T-cell (primary cell): ENCODE measurements at regions of chr6 and their contacts with region 1.

Region 1: GRCh38 chr6:159134701-159135364 is 34.4 kb upstream of the FNDC1 start:
- DNase-seq: peak; percentile 39 to 88 (median 68)
- ATAC-seq: peak; percentile 85 to 92 (median 88)
- H3K4me3 ChIP-seq: no peak overlapping the region
- H3K4me3 Mint-ChIP-seq: no peak overlapping the region
- H3K27ac ChIP-seq: no peak overlapping the region
- H3K27ac Mint-ChIP-seq: no peak overlapping the region
- H3K4me1 ChIP-seq: no peaks in the 10 kb centered on the region
- H3K4me1 Mint-ChIP-seq: peaks cover 6 to 7% (median 6%) of the 10 kb centered on the region in 3 donors
- H3K27me3 ChIP-seq: peaks cover 0 to 16% of the 10 kb centered on the region in 2 experiments
- H3K27me3 Mint-ChIP-seq: peaks cover 0 to 6% of the 10 kb centered on the region in 2 donors

Region 2: GRCh38 chr6:159110013-159110412 is 24.8 kb before region 1 on chr6:
- CTCF ChIA-PET with region 1: interaction called, 9 to 24 read pairs
- POLR2A ChIA-PET with region 1: no interaction called
- DNase-seq: peak in 7 of 35 experiments; percentile 24 to 75 (median 31)
- ATAC-seq: no peak
- H3K4me3 ChIP-seq: no peak overlapping the region
- H3K4me3 Mint-ChIP-seq: no peak overlapping the region
- H3K27ac ChIP-seq: peak overlapping the region; percentile 87
- H3K27ac Mint-ChIP-seq: peak overlapping the region; percentile 91 to 92
- H3K4me1 ChIP-seq: peaks cover 35 to 69% of the 10 kb centered on the region in 2 experiments
- H3K4me1 Mint-ChIP-seq: peaks cover 61 to 79% (median 68%) of the 10 kb centered on the region in 3 donors
- H3K27me3 ChIP-seq: no peaks in the 10 kb centered on the region
- H3K27me3 Mint-ChIP-seq: no peaks in the 10 kb centered on the region

Region 3: DNA sequence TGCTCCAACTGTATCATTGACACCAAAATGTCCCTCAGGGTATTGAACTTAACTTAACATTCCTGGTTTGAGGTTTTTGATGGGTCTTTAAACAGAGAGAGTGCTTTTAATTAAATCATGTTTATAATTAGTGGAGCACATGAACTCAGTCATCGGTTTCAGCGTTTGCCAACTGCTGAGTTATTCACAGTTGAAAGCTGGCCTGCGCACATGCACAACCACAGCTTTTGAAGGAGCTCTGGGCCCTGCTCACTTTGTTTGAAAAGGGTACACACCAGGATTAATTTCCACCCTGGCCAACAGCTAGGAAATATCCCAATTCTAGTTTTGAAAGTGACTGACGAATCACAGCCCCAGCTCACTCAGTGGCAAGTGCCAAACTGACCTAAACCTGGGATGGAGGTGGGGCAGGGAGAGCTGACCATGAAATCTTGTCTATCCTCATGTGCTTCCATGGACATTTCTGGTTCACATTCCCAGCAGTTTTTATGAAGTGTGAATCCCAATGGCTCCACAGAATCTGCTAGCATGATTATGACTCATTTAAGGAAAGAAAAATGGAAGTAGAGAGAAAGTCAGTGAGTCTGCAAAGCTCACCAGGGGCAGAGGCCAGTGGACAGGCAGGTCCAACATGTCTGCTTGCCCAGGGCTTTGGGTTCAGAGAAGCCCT is 282.2 kb after region 1 on chr6:
- CTCF ChIA-PET with region 1: no interaction called
- POLR2A ChIA-PET with region 1: no interaction called
- DNase-seq: no peak
- ATAC-seq: no peak
- H3K4me3 ChIP-seq: no peak overlapping the region
- H3K4me3 Mint-ChIP-seq: no peak overlapping the region
- H3K27ac ChIP-seq: no peak overlapping the region
- H3K27ac Mint-ChIP-seq: no peak overlapping the region
- H3K4me1 ChIP-seq: no peaks in the 10 kb centered on the region
- H3K4me1 Mint-ChIP-seq: no peaks in the 10 kb centered on the region
- H3K27me3 ChIP-seq: peaks cover 0 to 9% of the 10 kb centered on the region in 2 experiments
- H3K27me3 Mint-ChIP-seq: peaks cover 4 to 15% of the 10 kb centered on the region in 2 donors